ENCODE measurements at regions of chr1 and their contacts with region 1.

Region 1: GRCh38 chr1:13960375-13960987 is 260.5 kb downstream of the PRDM2 start:
- DNase-seq: peak; percentile 68 to 80 (median 73)
- ATAC-seq: peak; percentile 59
- H3K4me3 ChIP-seq: no peak overlapping the region
- H3K27ac ChIP-seq: no peak overlapping the region
- H3K4me1 ChIP-seq: no peaks in the 10 kb centered on the region
- H3K27me3 ChIP-seq: no peaks in the 10 kb centered on the region
- CTCF ChIP-seq: peak; percentile 85 to 94 (median 94)
- POLR2A ChIP-seq: no peak

Region 2: DNA sequence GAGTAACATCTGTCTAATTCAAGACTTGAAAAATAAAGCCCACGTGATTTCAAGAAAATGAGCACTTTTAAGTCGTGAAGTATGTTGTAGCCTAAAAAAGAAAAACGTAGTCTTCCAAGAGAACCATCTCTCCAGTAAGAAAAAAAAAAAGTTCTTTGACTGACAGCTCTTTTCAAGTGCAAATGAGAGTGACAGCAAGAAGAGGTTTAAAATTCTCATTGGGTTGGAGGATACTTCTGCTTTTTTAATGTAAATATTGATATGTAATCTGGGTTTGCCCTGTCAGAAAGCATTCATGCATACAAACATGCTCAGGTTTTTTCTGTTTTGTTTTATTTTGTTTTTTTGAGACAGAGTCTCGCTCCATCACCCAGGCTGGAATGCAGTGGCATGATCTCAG is 292.8 kb before region 1 on chr1:
- intact Hi-C with region 1: loop called (anchors 5 kb)
- DNase-seq: no peak
- ATAC-seq: no peak
- H3K4me3 ChIP-seq: no peak overlapping the region
- H3K27ac ChIP-seq: no peak overlapping the region
- H3K4me1 ChIP-seq: no peaks in the 10 kb centered on the region
- H3K27me3 ChIP-seq: no peaks in the 10 kb centered on the region
- CTCF ChIP-seq: no peak
- POLR2A ChIP-seq: no peak